CD4-positive, alpha-beta memory T cell (primary cell): ENCODE measurements at regions of chr9 and their contacts with region 1.

Region 1: GRCh38 chr9:93003552-93004407 is 54.7 kb upstream of the SUSD3 start:
- DNase-seq: peak; percentile 64 to 73 (median 72)
- H3K4me3 ChIP-seq: no peak overlapping the region
- H3K4me3 Mint-ChIP-seq: peak overlapping the region in 7 of 8 donors; percentile 29 to 78 (median 54)
- H3K27ac ChIP-seq: peak overlapping the region; percentile 44
- H3K27ac Mint-ChIP-seq: peak overlapping the region; percentile 89 to 95 (median 92)
- H3K4me1 ChIP-seq: peaks cover 56% of the 10 kb centered on the region
- H3K4me1 Mint-ChIP-seq: peaks cover 38 to 66% (median 50%) of the 10 kb centered on the region in 4 donors
- H3K27me3 ChIP-seq: no peaks in the 10 kb centered on the region
- H3K27me3 Mint-ChIP-seq: no peaks in the 10 kb centered on the region

Region 2: DNA sequence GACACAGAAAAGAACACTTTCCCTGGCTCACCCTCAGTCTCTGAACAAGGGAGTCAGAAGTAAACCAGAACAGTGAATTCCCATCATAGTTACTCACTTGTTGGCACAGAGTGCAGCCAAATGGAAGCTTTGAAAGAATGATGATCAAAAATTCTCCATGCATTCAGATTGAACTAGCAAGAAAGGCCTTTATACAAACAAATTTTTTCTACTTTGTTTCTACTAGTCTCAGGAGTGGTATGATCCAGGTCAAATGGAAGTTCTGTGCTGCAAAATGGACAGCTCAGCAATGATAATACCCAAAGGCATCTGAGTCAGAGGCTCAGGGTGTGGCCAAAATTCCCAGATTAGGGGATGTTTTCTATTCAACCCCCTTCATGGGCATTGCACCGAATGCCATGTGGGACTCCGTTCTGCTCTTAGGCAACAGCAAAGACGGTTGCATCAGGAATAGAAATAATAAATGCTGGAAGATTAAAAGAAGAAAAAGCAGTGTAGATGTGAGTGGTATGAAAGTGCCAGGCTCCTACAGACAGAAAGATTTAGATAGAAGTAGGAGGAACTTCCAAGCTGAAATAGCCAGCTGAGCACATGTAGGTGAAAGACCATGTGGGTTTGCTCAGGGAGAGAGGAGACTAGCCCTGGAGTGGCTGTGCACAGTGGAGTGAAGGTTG is 497.5 kb before region 1 on chr9:
- CTCF ChIA-PET with region 1: no interaction called
- POLR2A ChIA-PET with region 1: no interaction called
- intact Hi-C with region 1: no loop called
- DNase-seq: no peak
- H3K4me3 ChIP-seq: no peak overlapping the region
- H3K4me3 Mint-ChIP-seq: no peak overlapping the region
- H3K27ac ChIP-seq: no peak overlapping the region
- H3K27ac Mint-ChIP-seq: no peak overlapping the region
- H3K4me1 ChIP-seq: no peaks in the 10 kb centered on the region
- H3K4me1 Mint-ChIP-seq: peaks cover 0 to 4% (median 2%) of the 10 kb centered on the region in 4 donors
- H3K27me3 ChIP-seq: no peaks in the 10 kb centered on the region
- H3K27me3 Mint-ChIP-seq: no peaks in the 10 kb centered on the region

Region 3: DNA sequence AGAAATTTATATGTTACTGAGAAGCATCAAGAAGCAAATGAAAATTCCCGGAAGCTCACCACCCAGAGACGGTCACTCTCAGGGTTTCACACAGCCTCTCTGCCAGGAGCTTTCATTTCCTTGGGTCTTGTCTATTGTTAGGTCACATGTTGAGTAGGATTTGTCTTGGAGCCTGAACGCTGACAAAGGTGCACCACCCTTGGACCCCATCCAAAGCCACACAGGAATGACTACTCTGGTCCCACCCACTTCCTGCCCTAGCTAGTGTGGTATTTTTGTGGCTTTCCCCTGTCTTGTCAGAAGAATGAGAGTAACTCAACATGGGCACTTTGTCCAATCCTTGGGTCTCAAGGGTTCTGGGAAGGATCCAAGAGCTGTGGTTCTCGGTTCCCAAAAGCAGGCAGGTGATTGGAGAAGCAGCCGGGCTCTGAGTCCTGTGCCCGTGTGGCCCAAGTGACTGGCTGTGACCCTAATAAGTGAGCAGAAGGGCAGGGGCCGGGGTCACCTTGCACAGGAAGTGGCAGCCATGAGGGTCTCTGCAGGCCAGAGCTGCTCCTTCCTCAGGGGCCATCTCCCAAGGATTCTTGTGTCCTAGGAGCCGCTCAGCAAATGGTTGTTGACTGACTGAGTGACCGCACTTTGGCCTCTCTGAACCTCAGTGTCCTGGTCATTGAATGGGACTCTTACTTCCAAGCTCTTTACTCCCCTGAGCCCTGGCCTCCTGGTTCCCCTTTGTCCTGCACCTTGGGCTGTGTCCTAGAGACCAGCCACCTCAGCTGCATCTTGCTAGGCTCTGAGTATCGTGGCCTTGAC is 49.5 kb before region 1 on chr9:
- CTCF ChIA-PET with region 1: interaction called, 60 read pairs
- POLR2A ChIA-PET with region 1: interaction called, 21 read pairs
- intact Hi-C with region 1: loop called (anchors 1 kb)
- DNase-seq: peak; percentile 87 to 95 (median 90)
- H3K4me3 ChIP-seq: peak overlapping the region; percentile 49 to 57
- H3K4me3 Mint-ChIP-seq: peak overlapping the region; percentile 86 to 92 (median 88)
- H3K27ac ChIP-seq: peak overlapping the region; percentile 75
- H3K27ac Mint-ChIP-seq: peak overlapping the region; percentile 89 to 100 (median 99)
- H3K4me1 ChIP-seq: peaks cover 91% of the 10 kb centered on the region
- H3K4me1 Mint-ChIP-seq: peaks cover 65 to 91% (median 78%) of the 10 kb centered on the region in 4 donors
- H3K27me3 ChIP-seq: no peaks in the 10 kb centered on the region
- H3K27me3 Mint-ChIP-seq: no peaks in the 10 kb centered on the region

Region 4: DNA sequence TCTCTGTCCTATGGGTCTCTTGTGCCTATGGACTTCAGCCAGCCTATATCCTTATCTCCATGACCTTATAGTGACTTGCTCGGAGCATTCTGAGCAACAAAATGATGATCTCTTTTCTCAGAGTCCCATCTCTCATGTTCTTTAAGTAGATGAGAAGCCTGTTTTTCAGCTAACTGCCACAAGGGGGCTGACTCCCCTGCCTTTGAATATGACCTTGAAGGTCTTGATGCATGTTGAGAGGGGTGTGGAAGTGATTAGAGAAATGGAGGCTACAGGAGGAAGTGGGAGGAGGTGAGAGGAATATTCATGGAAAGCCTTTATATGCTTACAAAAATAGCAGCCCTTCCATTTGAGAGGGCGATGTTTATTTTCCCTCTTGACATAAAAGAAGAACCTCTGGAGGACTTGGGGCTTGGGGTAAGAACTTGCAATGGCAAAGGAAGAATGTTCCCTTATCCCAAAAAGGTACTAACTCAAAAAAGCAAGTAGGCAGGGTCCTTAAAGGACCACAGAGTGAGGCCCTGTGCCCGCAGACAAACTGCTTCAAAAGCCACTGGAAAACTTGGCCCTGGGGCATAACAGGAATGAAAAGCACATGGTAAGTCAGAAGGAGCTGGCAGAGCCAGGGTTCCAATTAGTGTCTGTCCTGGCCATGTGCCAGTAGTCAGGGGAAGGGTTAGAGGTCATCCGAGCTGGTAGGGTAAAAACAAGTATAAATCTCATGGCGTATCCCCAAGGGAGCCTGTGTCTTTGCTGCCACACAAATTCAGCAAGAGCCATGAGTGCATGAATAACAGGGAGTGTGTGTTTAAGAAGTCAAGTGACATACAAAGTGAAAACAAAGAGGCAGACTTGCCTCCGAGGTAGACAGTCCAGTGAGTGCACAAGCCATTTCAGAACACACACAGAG is 17.3 kb before region 1 on chr9:
- CTCF ChIA-PET with region 1: interaction called, 50 read pairs
- POLR2A ChIA-PET with region 1: interaction called, 9 read pairs
- intact Hi-C with region 1: no loop called
- DNase-seq: peak; percentile 50 to 72 (median 62)
- H3K4me3 ChIP-seq: no peak overlapping the region
- H3K4me3 Mint-ChIP-seq: peak overlapping the region in 7 of 8 donors; percentile 8 to 78 (median 43)
- H3K27ac ChIP-seq: peak overlapping the region; percentile 38
- H3K27ac Mint-ChIP-seq: peak overlapping the region; percentile 61 to 93 (median 87)
- H3K4me1 ChIP-seq: peaks cover 87% of the 10 kb centered on the region
- H3K4me1 Mint-ChIP-seq: peaks cover 62 to 95% (median 76%) of the 10 kb centered on the region in 4 donors
- H3K27me3 ChIP-seq: no peaks in the 10 kb centered on the region
- H3K27me3 Mint-ChIP-seq: no peaks in the 10 kb centered on the region

Region 5: DNA sequence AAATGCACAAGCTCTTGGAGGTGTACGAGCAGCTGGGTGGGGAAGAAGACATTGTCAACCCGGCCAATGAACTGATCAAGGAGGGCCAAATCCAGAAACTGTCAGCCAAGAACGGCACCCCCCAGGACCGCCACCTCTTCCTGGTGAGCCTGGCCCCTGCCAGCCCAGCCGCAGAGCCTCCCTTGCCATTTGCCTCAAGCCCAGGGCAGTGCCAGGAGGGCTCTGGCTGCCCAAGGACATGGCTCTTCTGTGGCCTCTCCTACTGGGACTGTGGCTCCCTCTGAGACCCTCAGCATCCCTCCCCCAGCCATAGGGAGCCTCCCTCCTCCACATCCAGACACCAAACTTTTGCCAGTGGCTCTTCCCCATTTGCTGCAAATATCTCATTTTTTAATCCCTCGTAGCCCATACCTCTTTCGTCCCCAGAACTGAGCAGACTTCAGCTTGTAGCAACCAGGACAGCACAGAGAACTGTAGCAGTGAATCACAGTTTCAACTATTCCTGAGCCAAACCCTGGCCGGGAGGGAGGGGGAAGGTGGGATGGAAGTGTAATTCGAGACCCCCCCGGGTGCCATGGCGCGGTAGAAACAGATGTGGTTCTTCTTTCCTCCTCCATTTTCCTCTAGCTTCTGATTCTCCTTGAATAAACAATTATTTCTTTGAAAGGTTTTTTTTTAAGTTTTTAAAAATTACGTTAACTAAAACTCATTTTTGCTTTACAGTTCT is 10.2 kb after region 1 on chr9:
- CTCF ChIA-PET with region 1: interaction called, 59 read pairs
- POLR2A ChIA-PET with region 1: interaction called, 6 read pairs
- intact Hi-C with region 1: no loop called
- DNase-seq: no peak
- H3K4me3 ChIP-seq: no peak overlapping the region
- H3K4me3 Mint-ChIP-seq: no peak overlapping the region
- H3K27ac ChIP-seq: no peak overlapping the region
- H3K27ac Mint-ChIP-seq: peak overlapping the region; percentile 6 to 89 (median 78)
- H3K4me1 ChIP-seq: no peaks in the 10 kb centered on the region
- H3K4me1 Mint-ChIP-seq: peaks cover 7 to 21% (median 14%) of the 10 kb centered on the region in 4 donors
- H3K27me3 ChIP-seq: no peaks in the 10 kb centered on the region
- H3K27me3 Mint-ChIP-seq: no peaks in the 10 kb centered on the region

Region 6: DNA sequence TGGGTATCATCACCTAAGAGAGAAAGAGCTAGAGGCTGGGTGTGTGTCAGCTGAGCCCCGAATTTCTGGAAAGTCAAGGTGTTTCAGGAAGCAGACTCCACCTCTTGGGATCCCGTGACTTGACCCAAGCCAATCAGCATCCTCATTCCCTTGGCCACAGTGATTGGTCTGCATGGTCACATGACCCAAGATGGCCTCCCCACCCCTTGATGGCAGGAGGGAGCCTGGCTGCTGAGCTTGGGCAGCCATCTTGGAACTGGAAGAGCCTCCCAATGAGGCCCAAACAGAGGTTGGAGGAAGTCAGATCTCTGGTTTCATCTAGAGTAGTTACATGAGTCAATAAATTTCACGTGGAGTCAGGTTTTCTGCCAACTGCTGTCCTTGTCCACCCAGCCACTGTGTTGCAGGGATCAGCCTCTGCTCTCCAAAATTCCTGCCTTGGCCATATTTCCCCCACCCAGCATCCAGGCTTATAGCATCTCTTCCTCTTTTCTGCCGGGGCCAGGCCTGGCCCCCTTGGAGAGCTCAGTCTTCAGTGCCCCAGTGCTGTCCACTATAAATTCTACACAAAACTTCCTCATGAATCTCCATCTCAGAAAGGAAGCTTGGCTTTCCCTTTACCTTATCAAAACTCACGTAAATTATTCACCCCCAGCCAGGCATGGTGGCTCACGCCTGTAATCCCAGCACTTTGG is 37.5 kb after region 1 on chr9:
- CTCF ChIA-PET with region 1: interaction called, 6 read pairs
- POLR2A ChIA-PET with region 1: interaction called, 322 read pairs
- intact Hi-C with region 1: no loop called
- DNase-seq: peak in 1 of 5 donors; percentile 15
- H3K4me3 ChIP-seq: no peak overlapping the region
- H3K4me3 Mint-ChIP-seq: peak overlapping the region in 3 of 8 donors; percentile 8 to 31 (median 24)
- H3K27ac ChIP-seq: no peak overlapping the region
- H3K27ac Mint-ChIP-seq: peak overlapping the region; percentile 41 to 78 (median 74)
- H3K4me1 ChIP-seq: peaks cover 51% of the 10 kb centered on the region
- H3K4me1 Mint-ChIP-seq: peaks cover 27 to 64% (median 44%) of the 10 kb centered on the region in 4 donors
- H3K27me3 ChIP-seq: no peaks in the 10 kb centered on the region
- H3K27me3 Mint-ChIP-seq: no peaks in the 10 kb centered on the region

Region 7: DNA sequence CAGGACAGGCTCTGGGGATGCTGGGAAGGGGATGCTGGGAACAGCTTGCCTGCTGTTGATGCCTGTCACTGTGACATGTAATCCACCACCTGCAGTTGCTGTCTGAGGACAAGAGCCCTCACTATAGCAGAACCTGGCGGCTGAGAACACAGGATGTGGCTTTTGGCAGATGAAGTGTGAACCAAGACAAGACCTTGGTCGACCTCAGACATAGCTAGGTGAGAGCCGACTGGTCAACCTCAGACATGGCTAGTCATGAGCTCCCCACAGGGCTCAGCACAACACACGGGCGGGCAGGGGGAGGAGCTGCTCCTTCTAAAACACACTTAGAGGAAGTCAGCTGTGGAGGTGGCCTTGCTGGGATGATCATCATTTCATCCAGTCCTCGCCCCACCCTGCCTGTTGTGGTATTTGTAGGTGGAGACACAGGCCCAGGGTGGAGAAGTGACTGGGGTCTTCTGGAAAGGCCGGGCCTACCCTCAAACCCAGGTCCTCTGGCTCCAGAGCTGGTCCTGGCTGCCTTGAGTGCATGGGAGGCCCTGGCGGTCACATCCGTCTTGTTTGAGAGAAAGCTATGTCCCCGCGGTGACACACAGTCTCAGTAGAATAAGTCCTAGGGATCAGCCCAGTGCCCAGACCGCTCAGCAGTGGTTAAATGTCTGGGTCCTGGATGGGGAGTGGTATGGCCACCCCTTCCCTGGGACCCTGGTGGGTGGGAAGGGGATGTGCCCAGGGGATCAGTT is 60.8 kb after region 1 on chr9:
- CTCF ChIA-PET with region 1: interaction called, 21 read pairs
- POLR2A ChIA-PET with region 1: interaction called, 13 read pairs
- intact Hi-C with region 1: loop called (anchors 1 kb)
- DNase-seq: peak; percentile 90 to 96 (median 92)
- H3K4me3 ChIP-seq: peak overlapping the region in 1 of 2 donors; percentile 47
- H3K4me3 Mint-ChIP-seq: peak overlapping the region; percentile 87 to 95 (median 91)
- H3K27ac ChIP-seq: peak overlapping the region; percentile 72
- H3K27ac Mint-ChIP-seq: peak overlapping the region; percentile 96 to 100 (median 99)
- H3K4me1 ChIP-seq: peaks cover 98% of the 10 kb centered on the region
- H3K4me1 Mint-ChIP-seq: peaks cover 68 to 97% (median 82%) of the 10 kb centered on the region in 4 donors
- H3K27me3 ChIP-seq: no peaks in the 10 kb centered on the region
- H3K27me3 Mint-ChIP-seq: no peaks in the 10 kb centered on the region

Region 8: DNA sequence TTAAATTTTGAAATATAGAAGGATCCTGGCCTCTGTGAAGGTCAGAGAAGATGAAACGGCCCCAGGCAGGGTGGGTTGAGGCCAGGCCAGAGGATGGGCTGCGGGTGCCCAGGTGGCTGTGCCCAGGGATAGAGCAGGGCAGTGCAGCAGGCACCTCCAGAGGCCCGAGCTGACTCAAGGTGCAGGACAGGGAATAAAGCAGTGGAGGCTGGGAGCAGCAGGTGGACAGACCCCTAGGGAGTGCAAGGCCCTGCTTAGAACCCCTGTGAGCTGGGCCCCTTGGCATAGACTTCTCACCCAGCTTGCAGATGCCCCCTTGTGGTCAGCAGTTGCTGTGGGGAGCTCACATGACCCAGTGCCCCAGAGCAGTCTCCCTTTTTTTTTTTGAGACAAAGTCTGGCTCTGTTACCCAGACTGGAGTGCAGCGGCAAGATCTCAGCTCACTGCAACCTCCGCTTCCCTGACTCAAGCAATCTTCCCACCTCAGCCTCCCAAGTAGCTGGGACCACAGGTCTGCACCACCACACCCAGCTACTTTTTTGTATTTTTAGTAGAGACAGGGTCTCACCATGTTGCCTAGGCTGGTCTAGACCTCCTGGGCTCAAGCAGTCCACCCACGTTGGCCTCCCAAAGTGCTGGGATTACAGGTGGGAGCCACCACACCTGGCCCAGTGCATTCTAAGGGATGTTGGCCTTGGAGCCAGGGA is 298.9 kb after region 1 on chr9:
- CTCF ChIA-PET with region 1: interaction called, 4 read pairs
- POLR2A ChIA-PET with region 1: no interaction called
- intact Hi-C with region 1: loop called (anchors 10 kb)
- DNase-seq: peak; percentile 46 to 62 (median 57)
- H3K4me3 ChIP-seq: no peak overlapping the region
- H3K4me3 Mint-ChIP-seq: no peak overlapping the region
- H3K27ac ChIP-seq: no peak overlapping the region
- H3K27ac Mint-ChIP-seq: peak overlapping the region in 1 of 7 donors; percentile 65
- H3K4me1 ChIP-seq: no peaks in the 10 kb centered on the region
- H3K4me1 Mint-ChIP-seq: peaks cover 0 to 4% (median 0%) of the 10 kb centered on the region in 4 donors
- H3K27me3 ChIP-seq: no peaks in the 10 kb centered on the region
- H3K27me3 Mint-ChIP-seq: no peaks in the 10 kb centered on the region